Calu3 (cell line): ENCODE measurements at regions of chr1 and their contacts with region 1.

Region 1: DNA sequence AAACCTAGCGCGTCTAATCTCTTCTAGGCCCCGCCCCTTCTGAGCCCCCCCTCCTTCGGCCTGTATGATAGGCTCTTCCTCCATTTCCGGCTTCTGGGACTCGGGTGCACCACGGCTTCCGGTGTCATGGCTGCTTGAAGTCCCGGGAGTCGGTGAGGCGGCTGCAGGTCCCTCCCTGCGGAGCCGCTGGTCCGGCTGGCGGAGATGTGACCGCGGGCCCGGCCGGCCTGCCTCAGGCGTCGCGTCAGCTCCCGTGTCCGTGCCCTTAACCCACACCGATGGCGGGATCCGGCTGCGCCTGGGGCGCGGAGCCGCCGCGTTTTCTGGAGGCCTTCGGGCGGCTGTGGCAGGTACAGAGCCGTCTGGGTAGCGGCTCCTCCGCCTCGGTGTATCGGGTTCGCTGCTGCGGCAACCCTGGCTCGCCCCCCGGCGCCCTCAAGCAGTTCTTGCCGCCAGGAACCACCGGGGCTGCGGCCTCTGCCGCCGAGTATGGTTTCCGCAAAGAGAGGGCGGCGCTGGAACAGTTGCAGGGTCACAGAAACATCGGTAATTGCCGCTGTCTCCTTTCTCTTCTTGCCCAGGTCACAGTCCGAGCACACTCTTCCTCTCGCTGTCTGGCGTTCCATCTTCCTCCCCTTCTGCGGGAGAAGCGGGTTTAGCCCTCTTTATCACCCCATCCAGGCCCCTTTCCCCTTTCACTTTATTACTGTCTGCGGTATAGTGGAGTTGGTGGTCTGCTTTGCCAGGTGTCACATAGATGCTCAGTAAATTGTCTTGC is at the start of gene UHMK1:
- DNase-seq: peak; percentile 91
- H3K4me3 Mint-ChIP-seq: peak within 1 kb of the TSS; percentile 84
- H3K27ac Mint-ChIP-seq: peak within 1 kb of the TSS; percentile 63
- H3K4me1 Mint-ChIP-seq: peaks cover 10% of the 10 kb centered on the region
- H3K27me3 Mint-ChIP-seq: peaks cover 8% of the 10 kb centered on the region
- CTCF ChIP-seq: no peak
- total RNA-seq, gene UHMK1: 87.8 and 98.1 TPM in 2 replicates

Region 2: GRCh38 chr1:162151900-162152829 is 345.7 kb before region 1 on chr1:
- CTCF ChIA-PET with region 1: no interaction called
- intact Hi-C with region 1: no loop called
- DNase-seq: no peak
- H3K4me3 Mint-ChIP-seq: no peak overlapping the region
- H3K27ac Mint-ChIP-seq: no peak overlapping the region
- H3K4me1 Mint-ChIP-seq: peaks cover 12% of the 10 kb centered on the region
- H3K27me3 Mint-ChIP-seq: no peaks in the 10 kb centered on the region
- CTCF ChIP-seq: no peak

Region 3: DNA sequence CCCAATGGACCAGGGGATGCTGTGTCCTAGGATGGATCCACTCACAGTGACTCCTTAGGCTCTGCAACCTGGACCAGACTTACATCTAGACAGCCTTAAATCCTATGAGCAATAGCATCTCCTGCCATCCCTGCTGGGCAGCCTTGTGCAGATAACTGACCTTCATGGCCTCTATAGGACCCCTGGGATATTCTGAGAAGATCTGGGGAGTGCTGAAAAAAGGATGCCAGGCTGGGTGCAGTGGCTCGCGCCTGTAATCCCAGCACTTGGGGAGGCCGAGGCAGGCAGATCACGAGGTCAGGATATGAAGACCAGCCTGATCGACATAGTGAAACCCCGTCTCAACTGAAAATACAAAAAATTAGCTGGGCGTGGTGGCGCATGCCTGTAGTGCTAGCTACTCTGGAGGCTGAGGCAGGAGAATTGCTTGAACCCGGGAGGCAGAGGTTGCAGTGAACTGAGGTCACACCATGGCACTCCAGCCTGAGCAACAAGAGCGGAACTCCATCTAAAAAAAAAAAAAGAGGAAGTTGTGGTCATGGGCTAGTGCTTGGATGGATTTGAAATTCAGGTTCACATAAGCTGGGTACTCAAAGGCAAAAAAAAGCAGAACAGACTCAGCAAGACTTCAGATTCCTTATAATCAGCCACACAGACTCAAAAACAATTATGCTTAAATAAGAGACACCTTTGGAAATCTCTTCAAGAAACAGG is 75.1 kb before region 1 on chr1:
- CTCF ChIA-PET with region 1: interaction called, 3 read pairs
- intact Hi-C with region 1: loop called (anchors 5 kb)
- DNase-seq: no peak
- H3K4me3 Mint-ChIP-seq: no peak overlapping the region
- H3K27ac Mint-ChIP-seq: no peak overlapping the region
- H3K4me1 Mint-ChIP-seq: peaks cover 48% of the 10 kb centered on the region
- H3K27me3 Mint-ChIP-seq: no peaks in the 10 kb centered on the region
- CTCF ChIP-seq: no peak

Region 4: DNA sequence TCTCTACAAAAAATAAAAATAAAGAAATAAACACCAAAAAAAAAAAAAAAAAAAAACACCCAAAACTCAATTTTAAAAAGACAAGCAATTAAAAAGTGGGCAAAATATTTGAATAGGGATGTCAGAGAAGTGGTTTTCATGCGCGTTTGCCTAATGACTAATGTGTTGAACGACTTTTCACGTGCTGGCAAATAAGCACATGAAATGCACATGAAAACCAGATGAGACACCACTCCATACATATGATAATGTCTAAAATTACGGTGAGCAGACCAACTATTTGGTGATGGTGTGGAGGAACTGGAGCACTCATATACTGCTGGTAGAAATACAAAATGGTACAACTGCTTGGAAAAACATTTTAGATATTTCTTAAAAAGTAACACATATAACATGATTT is 39.7 kb before region 1 on chr1:
- CTCF ChIA-PET with region 1: no interaction called
- intact Hi-C with region 1: no loop called
- DNase-seq: no peak
- H3K4me3 Mint-ChIP-seq: no peak overlapping the region
- H3K27ac Mint-ChIP-seq: no peak overlapping the region
- H3K4me1 Mint-ChIP-seq: peaks cover 8% of the 10 kb centered on the region
- H3K27me3 Mint-ChIP-seq: no peaks in the 10 kb centered on the region
- CTCF ChIP-seq: no peak

Region 5: DNA sequence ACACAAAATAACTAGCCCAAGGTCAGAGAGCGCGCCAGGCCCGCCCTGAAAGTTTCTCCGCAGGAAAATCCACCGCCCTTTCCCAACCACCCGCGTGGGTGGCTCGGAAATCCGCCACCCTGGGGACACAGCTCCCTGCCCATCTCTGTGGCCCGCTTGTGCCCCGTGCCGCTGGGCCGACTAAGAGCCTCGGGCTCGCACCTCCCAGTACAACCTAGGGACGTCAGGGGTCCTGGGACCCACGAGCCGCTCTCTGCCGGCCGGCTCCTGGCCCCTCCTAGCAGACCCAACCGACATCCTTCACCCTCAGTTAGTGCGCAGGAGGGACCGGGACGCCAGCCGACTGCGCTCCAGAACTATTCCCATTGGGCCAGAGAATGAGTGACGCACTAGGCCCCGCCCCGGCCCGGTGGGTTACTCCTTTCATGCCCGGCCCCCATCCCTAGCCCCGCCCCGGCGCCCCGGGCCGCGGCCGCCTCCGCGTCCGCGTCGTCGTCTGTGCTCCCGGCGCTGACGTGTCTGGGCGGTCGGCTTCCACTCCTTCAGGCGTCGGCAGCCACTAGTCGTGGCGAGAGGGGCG is 63.2 kb after region 1 on chr1:
- CTCF ChIA-PET with region 1: no interaction called
- intact Hi-C with region 1: loop called (anchors 5 kb)
- DNase-seq: peak; percentile 99
- H3K4me3 Mint-ChIP-seq: peak overlapping the region; percentile 84
- H3K27ac Mint-ChIP-seq: peak overlapping the region; percentile 72
- H3K4me1 Mint-ChIP-seq: peaks cover 26% of the 10 kb centered on the region
- H3K27me3 Mint-ChIP-seq: no peaks in the 10 kb centered on the region
- CTCF ChIP-seq: no peak